Caco-2 (cell line): ENCODE measurements at regions of chr7 and their contacts with region 1.

Region 1: GRCh38 chr7:148286150-148286549 is 304.4 kb upstream of the C7orf33 start:
- DNase-seq: peak; percentile 47 to 67
- H3K4me3 ChIP-seq: no peak overlapping the region
- H3K4me3 Mint-ChIP-seq: no peak overlapping the region
- H3K27ac Mint-ChIP-seq: no peak overlapping the region
- H3K4me1 ChIP-seq: no peaks in the 10 kb centered on the region
- H3K4me1 Mint-ChIP-seq: peaks cover 24% of the 10 kb centered on the region
- H3K27me3 ChIP-seq: no peaks in the 10 kb centered on the region
- H3K27me3 Mint-ChIP-seq: no peaks in the 10 kb centered on the region
- CTCF ChIP-seq: peak; percentile 52 to 81

Region 2: DNA sequence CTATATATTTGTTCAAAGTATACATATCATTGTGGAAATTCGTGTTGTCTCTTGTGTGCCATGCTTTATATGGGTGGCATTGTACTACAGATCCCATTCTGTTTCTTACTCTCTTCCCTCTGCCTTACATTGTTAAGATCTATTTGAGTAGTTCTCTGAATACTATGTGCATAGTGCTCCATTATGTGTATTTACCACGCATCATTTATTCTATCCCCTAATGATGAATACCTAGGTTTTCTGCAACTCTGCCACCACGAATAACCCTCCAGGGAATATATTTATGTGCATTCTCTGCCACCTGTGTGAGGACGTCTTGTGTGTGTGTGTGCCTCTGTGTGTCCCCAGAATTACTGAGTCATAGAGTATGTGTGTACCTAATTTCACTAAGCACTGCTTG is 126.8 kb before region 1 on chr7:
- CTCF ChIA-PET with region 1: no interaction called
- POLR2A ChIA-PET with region 1: no interaction called
- intact Hi-C with region 1: no loop called
- DNase-seq: no peak
- H3K4me3 ChIP-seq: no peak overlapping the region
- H3K4me3 Mint-ChIP-seq: no peak overlapping the region
- H3K27ac Mint-ChIP-seq: no peak overlapping the region
- H3K4me1 ChIP-seq: no peaks in the 10 kb centered on the region
- H3K4me1 Mint-ChIP-seq: no peaks in the 10 kb centered on the region
- H3K27me3 ChIP-seq: no peaks in the 10 kb centered on the region
- H3K27me3 Mint-ChIP-seq: peaks cover 12% of the 10 kb centered on the region
- CTCF ChIP-seq: no peak

Region 3: GRCh38 chr7:148304456-148304855 is 18.3 kb after region 1 on chr7:
- CTCF ChIA-PET with region 1: no interaction called
- POLR2A ChIA-PET with region 1: no interaction called
- intact Hi-C with region 1: no loop called
- DNase-seq: no peak
- H3K4me3 ChIP-seq: no peak overlapping the region
- H3K4me3 Mint-ChIP-seq: no peak overlapping the region
- H3K27ac Mint-ChIP-seq: no peak overlapping the region
- H3K4me1 ChIP-seq: peaks cover 7% of the 10 kb centered on the region
- H3K4me1 Mint-ChIP-seq: no peaks in the 10 kb centered on the region
- H3K27me3 ChIP-seq: no peaks in the 10 kb centered on the region
- H3K27me3 Mint-ChIP-seq: no peaks in the 10 kb centered on the region
- CTCF ChIP-seq: no peak

Region 4: DNA sequence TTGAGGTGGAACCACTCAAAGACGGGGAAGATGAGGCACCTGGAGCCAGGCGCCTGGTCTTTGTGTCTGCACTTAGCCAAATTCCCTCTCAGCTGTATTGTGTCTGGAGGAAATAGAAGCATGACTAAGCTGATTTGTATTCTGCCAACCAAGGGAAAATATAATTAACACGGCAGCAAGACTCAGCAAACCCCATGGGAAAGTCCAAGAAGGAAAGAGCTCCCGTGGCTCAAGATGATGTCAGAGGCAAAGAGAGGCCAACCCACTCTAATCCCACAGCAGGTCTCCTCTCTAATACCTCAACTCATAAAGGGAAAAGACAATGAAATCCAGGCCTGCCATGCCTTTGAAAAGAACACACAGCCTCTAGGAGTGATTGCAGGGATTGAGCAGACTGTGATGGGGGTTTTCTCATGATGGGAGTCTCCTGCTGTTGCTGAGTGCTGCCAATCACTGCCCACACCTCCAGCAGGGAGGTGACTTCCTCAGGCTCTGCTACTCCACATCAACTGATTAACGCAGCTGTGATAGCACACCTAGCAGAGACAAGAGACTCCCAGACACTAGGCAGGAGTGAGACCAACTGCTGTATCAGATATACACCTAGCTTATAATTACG is 48.9 kb after region 1 on chr7:
- CTCF ChIA-PET with region 1: no interaction called
- POLR2A ChIA-PET with region 1: no interaction called
- intact Hi-C with region 1: loop called (anchors 1 kb)
- DNase-seq: no peak
- H3K4me3 ChIP-seq: no peak overlapping the region
- H3K4me3 Mint-ChIP-seq: no peak overlapping the region
- H3K27ac Mint-ChIP-seq: no peak overlapping the region
- H3K4me1 ChIP-seq: peaks cover 25% of the 10 kb centered on the region
- H3K4me1 Mint-ChIP-seq: peaks cover 27% of the 10 kb centered on the region
- H3K27me3 ChIP-seq: no peaks in the 10 kb centered on the region
- H3K27me3 Mint-ChIP-seq: no peaks in the 10 kb centered on the region
- CTCF ChIP-seq: no peak

Region 5: GRCh38 chr7:148434181-148434757 is 148.1 kb after region 1 on chr7:
- CTCF ChIA-PET with region 1: no interaction called
- POLR2A ChIA-PET with region 1: no interaction called
- intact Hi-C with region 1: loop called (anchors 2 kb)
- DNase-seq: no peak
- H3K4me3 ChIP-seq: no peak overlapping the region
- H3K4me3 Mint-ChIP-seq: no peak overlapping the region
- H3K27ac Mint-ChIP-seq: no peak overlapping the region
- H3K4me1 ChIP-seq: 0 out of 2 replicates have a peak, but pooled peaks cover under 1% of the 10 kb centered on the region
- H3K4me1 Mint-ChIP-seq: peaks cover 7% of the 10 kb centered on the region
- H3K27me3 ChIP-seq: no peaks in the 10 kb centered on the region
- H3K27me3 Mint-ChIP-seq: no peaks in the 10 kb centered on the region
- CTCF ChIP-seq: no peak

Region 6: DNA sequence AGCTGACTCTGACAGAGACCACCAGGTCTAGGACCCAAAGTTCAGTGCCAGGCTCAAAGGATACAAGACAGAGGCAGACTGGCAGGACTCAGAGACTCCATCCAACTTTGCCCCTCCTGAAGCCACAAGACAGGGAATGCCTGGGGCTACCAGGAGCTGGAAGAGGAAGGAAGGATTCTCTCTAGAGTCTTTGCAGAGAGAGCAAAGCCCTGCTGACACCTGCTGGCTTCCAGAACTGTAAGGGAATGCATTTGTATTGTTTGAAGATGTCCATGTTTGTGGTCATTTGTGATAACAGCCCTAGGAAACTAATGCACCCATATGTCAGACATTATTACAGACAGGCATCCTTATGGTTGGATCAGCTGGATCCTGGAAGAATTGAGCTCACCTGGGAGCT is 172.1 kb after region 1 on chr7:
- CTCF ChIA-PET with region 1: no interaction called
- POLR2A ChIA-PET with region 1: no interaction called
- intact Hi-C with region 1: loop called (anchors 1 kb)
- DNase-seq: peak in 1 of 2 experiments; percentile 9
- H3K4me3 ChIP-seq: no peak overlapping the region
- H3K4me3 Mint-ChIP-seq: no peak overlapping the region
- H3K27ac Mint-ChIP-seq: peak overlapping the region; percentile 40
- H3K4me1 ChIP-seq: peaks cover 18% of the 10 kb centered on the region
- H3K4me1 Mint-ChIP-seq: peaks cover 15% of the 10 kb centered on the region
- H3K27me3 ChIP-seq: no peaks in the 10 kb centered on the region
- H3K27me3 Mint-ChIP-seq: no peaks in the 10 kb centered on the region
- CTCF ChIP-seq: no peak

Region 7: DNA sequence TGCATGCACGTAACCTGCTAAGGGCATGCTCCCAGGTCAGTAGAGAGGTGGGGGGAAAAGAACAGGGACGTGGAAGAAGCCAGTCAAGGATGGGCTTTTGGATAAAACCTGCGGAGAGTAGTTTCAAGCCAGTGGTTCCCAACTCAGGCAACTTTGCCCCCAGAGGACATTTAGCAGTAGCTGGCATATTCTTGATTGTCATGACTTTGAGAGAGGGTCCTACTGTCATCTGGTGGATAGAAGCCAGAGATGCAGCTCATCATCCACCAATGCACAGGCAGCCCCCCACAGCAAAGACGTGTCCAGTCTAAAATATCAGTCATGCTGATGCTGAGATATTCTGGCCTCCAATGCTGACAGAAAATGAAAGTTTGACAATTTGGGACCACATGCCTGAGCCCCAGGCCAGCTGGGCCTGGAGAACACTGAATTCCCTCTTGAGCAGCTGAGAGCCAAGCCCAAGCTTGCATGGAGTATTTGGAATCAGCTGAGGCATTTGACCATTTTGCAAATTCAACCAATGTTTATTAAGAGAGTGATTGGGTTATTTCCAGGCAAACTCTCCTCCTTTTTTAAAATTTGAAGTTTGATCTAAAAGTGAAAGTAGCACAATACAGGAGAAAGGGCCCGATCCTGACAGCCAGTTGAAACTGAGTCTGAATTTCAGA is 194.5 kb after region 1 on chr7:
- CTCF ChIA-PET with region 1: no interaction called
- POLR2A ChIA-PET with region 1: no interaction called
- intact Hi-C with region 1: loop called (anchors 1 kb)
- DNase-seq: no peak
- H3K4me3 ChIP-seq: no peak overlapping the region
- H3K4me3 Mint-ChIP-seq: no peak overlapping the region
- H3K27ac Mint-ChIP-seq: peak overlapping the region; percentile 51
- H3K4me1 ChIP-seq: peaks cover 14% of the 10 kb centered on the region
- H3K4me1 Mint-ChIP-seq: peaks cover 36% of the 10 kb centered on the region
- H3K27me3 ChIP-seq: no peaks in the 10 kb centered on the region
- H3K27me3 Mint-ChIP-seq: no peaks in the 10 kb centered on the region
- CTCF ChIP-seq: peak in 1 of 2 experiments; percentile 30

Region 8: GRCh38 chr7:148485618-148486017 is 199.5 kb after region 1 on chr7:
- CTCF ChIA-PET with region 1: no interaction called
- POLR2A ChIA-PET with region 1: no interaction called
- intact Hi-C with region 1: loop called (anchors 1 kb)
- DNase-seq: no peak
- H3K4me3 ChIP-seq: no peak overlapping the region
- H3K4me3 Mint-ChIP-seq: no peak overlapping the region
- H3K27ac Mint-ChIP-seq: no peak overlapping the region
- H3K4me1 ChIP-seq: peaks cover 14% of the 10 kb centered on the region
- H3K4me1 Mint-ChIP-seq: peaks cover 22% of the 10 kb centered on the region
- H3K27me3 ChIP-seq: no peaks in the 10 kb centered on the region
- H3K27me3 Mint-ChIP-seq: no peaks in the 10 kb centered on the region
- CTCF ChIP-seq: no peak

Region 9: GRCh38 chr7:148527707-148528168 is 241.6 kb after region 1 on chr7:
- CTCF ChIA-PET with region 1: no interaction called
- POLR2A ChIA-PET with region 1: no interaction called
- intact Hi-C with region 1: loop called (anchors 1 kb)
- DNase-seq: peak; percentile 67 to 73
- H3K4me3 ChIP-seq: no peak overlapping the region
- H3K4me3 Mint-ChIP-seq: no peak overlapping the region
- H3K27ac Mint-ChIP-seq: no peak overlapping the region
- H3K4me1 ChIP-seq: peaks cover 12% of the 10 kb centered on the region; the same call in 1 of the 2 replicates
- H3K4me1 Mint-ChIP-seq: peaks cover 13% of the 10 kb centered on the region
- H3K27me3 ChIP-seq: no peaks in the 10 kb centered on the region
- H3K27me3 Mint-ChIP-seq: peaks cover 3% of the 10 kb centered on the region
- CTCF ChIP-seq: peak; percentile 32 to 50